ENCODE measurements at regions of chr1 and their contacts with region 1.

Region 1: DNA sequence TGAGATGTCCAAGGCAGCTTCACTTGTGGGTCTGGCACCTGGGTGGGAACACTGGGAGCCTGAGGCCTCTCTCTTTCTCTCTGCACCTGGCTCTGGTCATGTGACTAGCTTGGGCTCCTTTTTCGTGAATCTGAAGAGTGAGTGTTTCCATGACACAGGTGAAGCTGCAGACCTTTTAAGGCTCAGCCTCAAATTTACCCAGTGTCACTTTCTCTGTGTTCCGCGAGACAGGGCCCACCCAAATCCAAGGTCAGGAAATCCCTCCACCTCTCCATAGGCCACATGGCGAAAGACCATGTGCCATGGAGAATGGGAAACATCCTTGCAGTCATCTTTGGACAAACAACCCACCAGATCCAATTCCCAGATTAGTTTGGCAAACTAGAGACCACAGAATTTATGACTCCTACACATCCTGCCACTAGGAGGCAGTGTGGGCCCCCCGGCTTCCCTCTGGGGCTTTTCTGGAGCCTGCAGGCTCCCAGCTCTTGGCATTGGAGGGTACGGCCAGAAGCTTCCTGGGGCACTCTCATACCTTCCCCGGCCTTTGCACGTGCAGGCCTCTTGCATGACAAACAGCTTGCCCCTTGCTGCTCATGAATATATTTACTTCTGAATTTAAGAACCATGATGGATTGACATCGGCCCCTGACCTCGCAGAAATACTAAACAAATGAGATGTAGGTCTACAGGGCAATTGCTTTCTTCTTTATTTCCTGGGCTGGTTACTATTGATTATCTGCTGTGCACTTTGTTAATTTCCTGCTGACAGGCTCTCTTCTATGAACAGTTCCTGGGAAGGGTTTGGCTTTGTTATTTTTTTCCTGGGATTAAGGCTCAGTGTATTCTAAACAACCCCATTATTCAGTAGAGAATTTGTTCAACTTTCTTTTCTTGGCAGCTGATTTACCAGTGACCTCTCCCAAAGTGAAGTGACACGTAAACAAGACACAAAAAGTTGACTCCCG is 180.7 kb downstream of the KAZN start:
- DNase-seq: no peak
- H3K4me3 ChIP-seq: no peak overlapping the region
- H3K27ac ChIP-seq: no peak overlapping the region
- H3K4me1 ChIP-seq: no peaks in the 10 kb centered on the region
- H3K27me3 ChIP-seq: no peaks in the 10 kb centered on the region
- CTCF ChIP-seq: peak; percentile 44 to 50
- POLR2A ChIP-seq: no peak

Region 2: DNA sequence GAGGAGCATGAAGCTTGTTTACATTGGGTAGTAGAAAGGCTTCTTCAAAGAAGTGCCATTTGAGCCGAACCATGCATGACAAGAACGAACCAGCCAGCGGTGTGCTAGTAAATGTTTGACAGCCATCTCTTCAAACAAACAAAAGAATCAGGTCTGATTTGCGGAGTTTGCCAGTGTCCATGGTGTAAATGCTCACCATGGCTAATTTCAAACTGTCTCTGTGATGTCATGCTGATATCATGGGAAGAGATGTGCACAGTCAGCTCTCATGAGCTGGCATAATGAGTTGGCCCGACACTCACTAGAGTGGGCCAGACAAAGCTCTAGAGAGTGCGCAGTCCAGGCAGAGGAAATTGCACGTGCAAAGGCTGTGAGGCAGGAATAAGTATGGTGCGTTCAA is 79.6 kb before region 1 on chr1:
- CTCF ChIA-PET with region 1: no interaction called
- POLR2A ChIA-PET with region 1: no interaction called
- dilution Hi-C with region 1: no loop called
- intact Hi-C with region 1: no loop called
- DNase-seq: no peak
- H3K4me3 ChIP-seq: no peak overlapping the region
- H3K27ac ChIP-seq: no peak overlapping the region
- H3K4me1 ChIP-seq: no peaks in the 10 kb centered on the region
- H3K27me3 ChIP-seq: no peaks in the 10 kb centered on the region
- CTCF ChIP-seq: no peak
- POLR2A ChIP-seq: no peak

Region 3: DNA sequence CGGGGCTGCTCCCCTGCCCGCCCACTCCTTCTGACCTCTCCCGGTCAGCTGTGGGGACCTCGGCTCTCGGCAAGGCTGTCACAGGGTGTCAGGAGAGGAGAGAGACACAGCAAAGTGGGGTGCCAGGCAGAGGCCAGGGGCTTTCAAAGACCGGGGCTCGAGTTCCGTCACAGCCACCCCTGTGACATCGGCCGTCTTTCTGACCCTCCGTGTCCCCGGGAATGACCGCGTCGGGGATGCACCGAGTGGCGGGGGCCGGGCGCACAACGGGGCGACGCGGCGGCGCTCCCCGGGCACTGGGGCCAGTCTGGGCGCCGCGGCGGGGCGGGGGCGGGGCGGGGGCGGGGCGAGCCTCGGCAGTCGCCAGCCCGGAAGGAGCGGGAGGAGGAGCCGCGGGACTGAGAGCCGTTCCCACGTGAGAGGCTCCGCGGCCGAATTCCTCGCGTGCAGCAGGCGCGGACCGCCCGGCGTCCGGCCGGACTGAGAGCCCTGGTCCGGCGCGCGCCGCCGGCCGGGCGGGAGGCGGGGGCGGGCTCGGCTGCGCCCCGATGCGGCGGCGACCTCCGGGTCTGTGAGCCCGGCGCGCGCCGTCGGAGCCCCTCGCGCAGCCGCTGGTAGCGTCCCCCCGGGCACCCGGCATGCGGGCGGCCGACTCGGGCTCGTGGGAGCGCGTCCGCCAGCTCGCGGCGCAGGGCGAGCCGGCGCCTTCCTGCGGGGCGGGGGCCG is 144.7 kb after region 1 on chr1:
- CTCF ChIA-PET with region 1: no interaction called
- POLR2A ChIA-PET with region 1: no interaction called
- dilution Hi-C with region 1: no loop called
- intact Hi-C with region 1: loop called (anchors 5 kb)
- DNase-seq: peak; percentile 20
- H3K4me3 ChIP-seq: peak overlapping the region in 1 of 3 experiments; percentile 62
- H3K27ac ChIP-seq: no peak overlapping the region
- H3K4me1 ChIP-seq: peaks cover 5% of the 10 kb centered on the region
- H3K27me3 ChIP-seq: peaks cover 8 to 14% of the 10 kb centered on the region in 2 experiments
- CTCF ChIP-seq: no peak
- POLR2A ChIP-seq: no peak

Region 4: GRCh38 chr1:15100121-15100874 is 321.1 kb after region 1 on chr1:
- CTCF ChIA-PET with region 1: no interaction called
- POLR2A ChIA-PET with region 1: no interaction called
- dilution Hi-C with region 1: no loop called
- intact Hi-C with region 1: loop called (anchors 1 kb)
- DNase-seq: peak; percentile 56
- H3K4me3 ChIP-seq: no peak overlapping the region
- H3K27ac ChIP-seq: no peak overlapping the region
- H3K4me1 ChIP-seq: no peaks in the 10 kb centered on the region
- H3K27me3 ChIP-seq: no peaks in the 10 kb centered on the region
- CTCF ChIP-seq: peak; percentile 86 to 88
- POLR2A ChIP-seq: no peak

Region 5: DNA sequence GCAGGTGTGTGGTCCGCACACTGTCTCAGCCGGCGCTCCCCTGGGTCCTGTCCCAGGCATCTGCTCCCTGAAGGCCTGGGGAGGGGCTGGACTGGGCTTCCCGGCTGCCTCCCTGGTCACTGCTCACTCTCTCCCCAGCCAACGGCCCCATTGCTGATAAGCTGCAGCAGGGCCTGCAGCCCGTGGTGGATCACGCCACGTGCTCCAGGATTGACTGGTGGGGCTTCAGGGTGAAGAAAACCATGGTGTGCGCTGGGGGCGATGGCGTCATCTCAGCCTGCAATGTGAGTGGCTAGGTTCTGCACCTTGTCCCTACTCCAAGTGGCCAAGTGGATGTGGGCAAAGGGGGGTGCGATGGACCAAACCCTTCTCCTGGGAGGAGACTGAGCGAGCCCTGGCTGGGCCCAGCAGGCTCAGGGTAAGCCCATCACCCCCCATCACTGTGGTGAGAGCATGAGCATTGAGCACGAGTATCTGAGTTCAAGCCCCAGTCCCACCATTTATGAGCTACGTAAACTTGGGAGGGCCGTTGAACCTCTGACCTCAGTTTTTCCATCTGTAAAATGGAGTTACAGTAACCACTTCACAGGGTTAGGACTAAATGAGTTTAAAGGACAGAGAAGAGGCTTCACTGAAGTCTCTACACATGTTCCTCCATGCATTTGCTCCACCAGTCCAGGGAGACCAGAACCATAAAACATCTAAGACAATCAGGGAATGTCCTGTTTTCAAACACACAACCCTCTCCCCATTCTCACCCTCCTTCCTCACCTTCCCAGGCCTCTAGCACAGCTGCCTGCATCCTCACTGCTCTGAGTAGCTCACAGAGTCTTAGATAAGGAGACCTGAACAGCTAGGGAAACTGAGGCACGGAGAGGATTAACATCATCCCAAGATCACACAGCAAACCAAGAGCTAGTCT is 665.5 kb after region 1 on chr1:
- CTCF ChIA-PET with region 1: no interaction called
- POLR2A ChIA-PET with region 1: no interaction called
- dilution Hi-C with region 1: no loop called
- intact Hi-C with region 1: no loop called
- DNase-seq: no peak
- H3K4me3 ChIP-seq: no peak overlapping the region
- H3K27ac ChIP-seq: no peak overlapping the region
- H3K4me1 ChIP-seq: no peaks in the 10 kb centered on the region
- H3K27me3 ChIP-seq: peaks cover 0 to 2% of the 10 kb centered on the region in 2 experiments
- CTCF ChIP-seq: no peak
- POLR2A ChIP-seq: no peak